ENCODE measurements at regions of chr19 and their contacts with region 1.

Region 1: DNA sequence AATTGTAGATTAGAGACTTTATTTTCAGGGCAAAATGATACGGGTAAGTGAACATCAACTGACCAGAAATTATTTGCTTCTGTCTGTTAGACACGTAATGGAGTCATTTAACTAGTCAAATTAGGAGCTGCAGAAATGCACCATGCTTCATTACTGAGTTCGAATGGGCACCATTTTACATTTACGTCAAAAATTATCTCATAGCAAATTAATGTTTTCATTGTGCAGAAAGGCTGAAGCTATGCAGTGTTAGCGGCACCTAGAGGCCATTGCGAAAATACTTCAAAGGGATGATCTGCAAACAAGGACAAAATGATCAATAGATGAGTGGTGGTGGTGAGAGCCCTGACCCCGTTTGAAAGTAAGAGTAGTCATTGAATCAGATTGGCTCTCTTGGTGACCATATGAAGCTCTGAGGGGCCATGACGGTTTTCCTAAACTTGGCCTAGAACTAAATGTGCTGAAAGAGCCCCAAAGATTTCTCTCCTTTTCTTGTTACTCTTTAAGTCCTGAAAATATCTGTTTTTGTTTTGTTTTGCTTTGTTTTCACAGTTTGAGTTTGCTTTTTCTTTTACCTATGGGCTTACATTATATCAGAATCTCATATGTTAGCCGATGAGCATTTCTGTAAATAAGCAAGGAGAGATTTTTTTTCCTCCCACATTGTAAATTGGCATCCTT is 277.9 kb downstream of the ZNF536 start:
- DNase-seq: peak; percentile 24
- ATAC-seq: peak; percentile 68
- H3K4me3 ChIP-seq: no peak overlapping the region
- H3K27ac ChIP-seq: no peak overlapping the region
- H3K4me1 ChIP-seq: no peaks in the 10 kb centered on the region
- H3K27me3 ChIP-seq: no peaks in the 10 kb centered on the region
- CTCF ChIP-seq: peak; percentile 74 to 86 (median 80)
- EP300 ChIP-seq: no peak
- POLR2A ChIP-seq: no peak
- RAD21 ChIP-seq: peak; percentile 86

Region 2: GRCh38 chr19:29735800-29736199 is 914.3 kb before region 1 on chr19:
- CTCF ChIA-PET with region 1: interaction called, 5 read pairs
- POLR2A ChIA-PET with region 1: no interaction called
- RAD21 ChIA-PET with region 1: no interaction called
- SMC1A ChIA-PET with region 1: interaction called, 3 read pairs
- in situ Hi-C with region 1: loop called (anchors 5 kb)
- intact Hi-C with region 1: loop called (anchors 1 kb)
- DNase-seq: no peak
- ATAC-seq: no peak
- H3K4me3 ChIP-seq: no peak overlapping the region
- H3K27ac ChIP-seq: no peak overlapping the region
- H3K4me1 ChIP-seq: no peaks in the 10 kb centered on the region
- H3K27me3 ChIP-seq: peaks cover 0 to 3% of the 10 kb centered on the region in 2 experiments; a peak in 2 of 4 replicates
- CTCF ChIP-seq: no peak
- EP300 ChIP-seq: no peak
- POLR2A ChIP-seq: no peak
- RAD21 ChIP-seq: no peak

Region 3: DNA sequence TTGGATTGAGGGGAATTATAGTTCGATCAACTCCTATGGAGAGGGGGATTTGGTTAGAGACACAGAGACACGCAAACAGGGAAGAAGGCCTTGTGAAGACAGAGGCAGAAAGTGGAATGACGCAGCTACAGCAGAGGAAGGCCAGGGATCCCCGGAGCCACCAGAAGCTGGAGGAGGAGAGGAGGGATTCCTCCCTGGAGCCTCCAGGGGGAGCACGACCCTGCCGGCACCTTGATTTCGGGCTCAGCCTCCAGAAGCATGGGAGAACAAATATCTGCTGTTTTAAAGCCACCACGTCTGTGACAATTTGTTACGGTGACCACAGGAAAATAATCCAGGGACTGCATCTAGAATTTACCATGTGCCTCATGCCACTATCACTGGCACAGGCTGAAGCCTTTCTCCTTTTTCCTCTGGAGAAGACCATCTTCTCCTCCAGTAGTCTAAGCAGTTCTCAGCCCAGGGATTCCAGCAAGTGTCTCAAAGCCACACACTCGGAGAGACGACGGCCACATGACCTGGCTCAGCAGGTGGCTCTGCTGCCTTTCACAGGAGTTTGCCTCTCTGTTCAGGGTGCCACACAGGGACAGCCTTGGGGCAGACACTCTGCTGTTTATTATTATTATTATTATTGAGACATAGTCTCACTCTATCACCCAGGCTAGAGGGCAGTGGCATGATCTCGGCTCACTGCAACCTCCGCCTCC is 878.2 kb before region 1 on chr19:
- CTCF ChIA-PET with region 1: no interaction called
- POLR2A ChIA-PET with region 1: no interaction called
- RAD21 ChIA-PET with region 1: no interaction called
- SMC1A ChIA-PET with region 1: no interaction called
- in situ Hi-C with region 1: no loop called
- intact Hi-C with region 1: loop called (anchors 10 kb)
- DNase-seq: no peak
- ATAC-seq: peak; percentile 67
- H3K4me3 ChIP-seq: no peak overlapping the region
- H3K27ac ChIP-seq: no peak overlapping the region
- H3K4me1 ChIP-seq: no peaks in the 10 kb centered on the region
- H3K27me3 ChIP-seq: no peaks in the 10 kb centered on the region
- CTCF ChIP-seq: peak; percentile 55 to 62 (median 59)
- EP300 ChIP-seq: no peak
- POLR2A ChIP-seq: no peak
- RAD21 ChIP-seq: peak; percentile 54

Region 4: GRCh38 chr19:29858000-29858596 is 792.0 kb before region 1 on chr19:
- CTCF ChIA-PET with region 1: interaction called, 3 read pairs
- POLR2A ChIA-PET with region 1: no interaction called
- RAD21 ChIA-PET with region 1: no interaction called
- SMC1A ChIA-PET with region 1: no interaction called
- in situ Hi-C with region 1: loop called (anchors 10 kb)
- intact Hi-C with region 1: loop called (anchors 5 kb)
- DNase-seq: no peak
- ATAC-seq: peak; percentile 94
- H3K4me3 ChIP-seq: no peak overlapping the region
- H3K27ac ChIP-seq: no peak overlapping the region
- H3K4me1 ChIP-seq: peaks cover 3% of the 10 kb centered on the region
- H3K27me3 ChIP-seq: no peaks in the 10 kb centered on the region; a peak in 1 of 4 replicates
- CTCF ChIP-seq: peak; percentile 64 to 77 (median 71)
- EP300 ChIP-seq: no peak
- POLR2A ChIP-seq: no peak
- RAD21 ChIP-seq: peak; percentile 42

Region 5: GRCh38 chr19:29887442-29887855 is 762.6 kb before region 1 on chr19:
- CTCF ChIA-PET with region 1: no interaction called
- POLR2A ChIA-PET with region 1: no interaction called
- RAD21 ChIA-PET with region 1: no interaction called
- SMC1A ChIA-PET with region 1: no interaction called
- in situ Hi-C with region 1: loop called (anchors 10 kb)
- intact Hi-C with region 1: no loop called
- DNase-seq: no peak
- ATAC-seq: no peak; the same call in 2 of the 3 replicates
- H3K4me3 ChIP-seq: no peak overlapping the region
- H3K27ac ChIP-seq: no peak overlapping the region
- H3K4me1 ChIP-seq: peaks cover 3% of the 10 kb centered on the region; the same call in 1 of the 2 replicates
- H3K27me3 ChIP-seq: no peaks in the 10 kb centered on the region
- CTCF ChIP-seq: no peak
- EP300 ChIP-seq: no peak
- POLR2A ChIP-seq: no peak
- RAD21 ChIP-seq: no peak

Region 6: GRCh38 chr19:30227661-30228428 is 422.2 kb before region 1 on chr19:
- CTCF ChIA-PET with region 1: no interaction called
- POLR2A ChIA-PET with region 1: no interaction called
- RAD21 ChIA-PET with region 1: no interaction called
- SMC1A ChIA-PET with region 1: interaction called, 3 read pairs
- in situ Hi-C with region 1: no loop called
- intact Hi-C with region 1: loop called (anchors 10 kb)
- DNase-seq: no peak
- ATAC-seq: peak; percentile 87
- H3K4me3 ChIP-seq: peak overlapping the region; percentile 67
- H3K27ac ChIP-seq: no peak overlapping the region
- H3K4me1 ChIP-seq: no peaks in the 10 kb centered on the region
- H3K27me3 ChIP-seq: peaks cover 8 to 21% of the 10 kb centered on the region in 2 experiments
- CTCF ChIP-seq: peak; percentile 16 to 42 (median 37); a peak in 4 of 6 replicates
- EP300 ChIP-seq: no peak
- POLR2A ChIP-seq: no peak
- RAD21 ChIP-seq: peak; percentile 36

Region 7: GRCh38 chr19:30669329-30670010 is 19.4 kb after region 1 on chr19:
- CTCF ChIA-PET with region 1: interaction called, 16 read pairs
- POLR2A ChIA-PET with region 1: no interaction called
- RAD21 ChIA-PET with region 1: no interaction called
- SMC1A ChIA-PET with region 1: no interaction called
- in situ Hi-C with region 1: no loop called
- intact Hi-C with region 1: no loop called
- DNase-seq: no peak
- ATAC-seq: peak; percentile 63
- H3K4me3 ChIP-seq: no peak overlapping the region
- H3K27ac ChIP-seq: no peak overlapping the region
- H3K4me1 ChIP-seq: no peaks in the 10 kb centered on the region
- H3K27me3 ChIP-seq: no peaks in the 10 kb centered on the region
- CTCF ChIP-seq: peak; percentile 64 to 68 (median 65)
- EP300 ChIP-seq: no peak
- POLR2A ChIP-seq: no peak
- RAD21 ChIP-seq: peak; percentile 57

Measured in GM12878 (cell line).